WTC11 (cell line): ENCODE measurements at regions of chr18 and their contacts with region 1.

Region 1: DNA sequence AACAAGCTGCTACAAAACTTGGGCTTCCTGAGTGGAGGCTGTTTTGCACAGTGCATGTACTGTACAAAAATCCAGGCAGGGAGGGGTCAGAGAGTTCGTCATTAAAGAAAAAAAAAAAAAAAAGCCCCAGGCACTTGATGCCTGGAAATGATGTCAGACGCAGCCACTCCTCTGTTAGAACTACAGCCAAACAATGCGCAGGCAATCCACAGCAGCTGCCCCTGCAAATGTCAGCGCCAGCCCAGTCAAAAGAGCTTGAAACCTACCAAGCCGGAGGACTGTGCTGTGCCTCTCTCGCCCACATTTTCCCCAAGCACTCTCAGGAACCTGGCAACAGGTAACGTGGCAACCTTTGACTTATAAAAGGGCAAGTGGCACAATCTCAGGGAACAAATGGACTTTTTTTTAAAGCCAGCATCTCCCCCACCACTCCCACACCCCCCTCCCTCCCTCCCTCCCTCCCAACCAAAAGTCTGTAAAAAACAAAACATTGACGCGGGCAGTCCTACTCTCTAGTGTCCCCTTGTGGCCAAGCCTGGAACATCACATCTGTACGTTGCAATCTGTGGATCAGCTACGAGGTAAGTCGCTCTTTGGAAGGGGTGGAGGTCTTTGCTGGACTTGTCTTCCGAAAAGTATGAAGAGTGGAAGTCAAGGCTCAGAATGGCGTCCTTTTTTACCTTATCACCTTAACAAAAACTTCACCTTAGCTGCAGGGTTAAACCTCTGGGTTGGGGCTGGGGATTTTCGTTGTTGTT is 144.1 kb downstream of the TGIF1 start:
- DNase-seq: peak; percentile 91
- ATAC-seq: peak; percentile 81
- H3K4me3 Mint-ChIP-seq: peak overlapping the region; percentile 62
- H3K27ac Mint-ChIP-seq: peak overlapping the region; percentile 95
- H3K4me1 Mint-ChIP-seq: peaks cover 81% of the 10 kb centered on the region
- H3K27me3 Mint-ChIP-seq: peaks cover 28% of the 10 kb centered on the region
- CTCF ChIP-seq: peak; percentile 69; the same call in 1 of the 2 replicates

Region 2: DNA sequence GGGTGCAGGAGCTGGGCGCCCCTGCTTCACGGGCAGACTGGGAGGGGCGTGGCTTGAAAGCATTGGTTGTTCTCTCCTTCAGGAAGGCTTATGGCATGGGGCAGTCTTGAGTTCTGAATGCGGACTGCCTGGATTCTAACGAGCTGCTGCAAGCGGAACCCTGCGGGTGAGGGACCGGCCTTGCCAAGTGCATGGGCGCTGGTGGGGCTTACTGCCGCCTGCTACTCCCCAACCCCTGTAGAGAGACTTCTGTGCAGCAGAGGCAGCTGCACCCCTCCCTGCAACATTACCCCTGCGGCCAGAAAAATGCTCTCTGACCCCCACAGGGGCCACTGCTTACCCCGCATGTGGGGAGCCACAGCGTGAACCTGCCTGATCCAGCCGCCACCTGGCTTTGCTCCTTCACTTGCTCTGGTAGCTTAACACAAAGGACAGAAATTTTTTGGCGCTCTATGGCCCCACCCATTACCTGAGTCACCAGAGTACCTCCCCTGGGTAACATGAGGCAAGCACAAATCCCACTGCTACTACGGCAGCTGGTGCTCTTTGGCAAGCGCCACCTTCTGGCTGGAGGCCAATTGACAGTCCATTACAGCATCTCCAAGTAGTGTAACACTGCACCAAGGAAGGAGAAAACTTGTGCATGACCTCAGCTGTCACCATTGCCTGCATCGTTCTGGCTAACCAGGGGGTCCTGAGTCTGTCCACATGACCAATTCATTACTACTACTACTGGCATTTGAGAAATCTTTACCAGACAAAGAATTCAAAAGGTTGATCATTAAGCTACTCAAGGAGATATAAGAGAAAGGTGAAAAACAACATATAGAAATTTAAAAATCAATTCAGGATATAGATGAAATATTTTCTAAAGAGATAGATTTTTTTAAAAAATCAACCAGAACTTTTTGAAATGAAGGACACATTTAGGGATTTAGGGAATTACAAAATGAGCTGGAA is 296.8 kb before region 1 on chr18:
- CTCF ChIA-PET with region 1: interaction called, 18 read pairs
- POLR2A ChIA-PET with region 1: no interaction called
- DNase-seq: peak; percentile 97
- ATAC-seq: peak; percentile 94
- H3K4me3 Mint-ChIP-seq: peak overlapping the region; percentile 91
- H3K27ac Mint-ChIP-seq: peak overlapping the region; percentile 83
- H3K4me1 Mint-ChIP-seq: peaks cover 18% of the 10 kb centered on the region
- H3K27me3 Mint-ChIP-seq: peaks cover 4% of the 10 kb centered on the region; the same call in 1 of the 2 replicates
- CTCF ChIP-seq: peak; percentile 59

Region 3: GRCh38 chr18:3454365-3455089 is 139.6 kb before region 1 on chr18:
- CTCF ChIA-PET with region 1: interaction called, 53 read pairs
- POLR2A ChIA-PET with region 1: interaction called, 7 read pairs
- DNase-seq: peak; percentile 45
- ATAC-seq: peak; percentile 7
- H3K4me3 Mint-ChIP-seq: peak overlapping the region; percentile 96
- H3K27ac Mint-ChIP-seq: peak overlapping the region; percentile 98
- H3K4me1 Mint-ChIP-seq: peaks cover 62% of the 10 kb centered on the region
- H3K27me3 Mint-ChIP-seq: no peaks in the 10 kb centered on the region
- CTCF ChIP-seq: peak; percentile 46

Region 4: GRCh38 chr18:3481696-3482210 is 112.3 kb before region 1 on chr18:
- CTCF ChIA-PET with region 1: interaction called, 21 read pairs
- POLR2A ChIA-PET with region 1: no interaction called
- DNase-seq: peak; percentile 52
- ATAC-seq: peak; percentile 94
- H3K4me3 Mint-ChIP-seq: no peak overlapping the region
- H3K27ac Mint-ChIP-seq: peak overlapping the region; percentile 71; the same call in 1 of the 2 replicates
- H3K4me1 Mint-ChIP-seq: peaks cover 28% of the 10 kb centered on the region
- H3K27me3 Mint-ChIP-seq: no peaks in the 10 kb centered on the region
- CTCF ChIP-seq: peak; percentile 36; the same call in 1 of the 2 replicates

Region 5: DNA sequence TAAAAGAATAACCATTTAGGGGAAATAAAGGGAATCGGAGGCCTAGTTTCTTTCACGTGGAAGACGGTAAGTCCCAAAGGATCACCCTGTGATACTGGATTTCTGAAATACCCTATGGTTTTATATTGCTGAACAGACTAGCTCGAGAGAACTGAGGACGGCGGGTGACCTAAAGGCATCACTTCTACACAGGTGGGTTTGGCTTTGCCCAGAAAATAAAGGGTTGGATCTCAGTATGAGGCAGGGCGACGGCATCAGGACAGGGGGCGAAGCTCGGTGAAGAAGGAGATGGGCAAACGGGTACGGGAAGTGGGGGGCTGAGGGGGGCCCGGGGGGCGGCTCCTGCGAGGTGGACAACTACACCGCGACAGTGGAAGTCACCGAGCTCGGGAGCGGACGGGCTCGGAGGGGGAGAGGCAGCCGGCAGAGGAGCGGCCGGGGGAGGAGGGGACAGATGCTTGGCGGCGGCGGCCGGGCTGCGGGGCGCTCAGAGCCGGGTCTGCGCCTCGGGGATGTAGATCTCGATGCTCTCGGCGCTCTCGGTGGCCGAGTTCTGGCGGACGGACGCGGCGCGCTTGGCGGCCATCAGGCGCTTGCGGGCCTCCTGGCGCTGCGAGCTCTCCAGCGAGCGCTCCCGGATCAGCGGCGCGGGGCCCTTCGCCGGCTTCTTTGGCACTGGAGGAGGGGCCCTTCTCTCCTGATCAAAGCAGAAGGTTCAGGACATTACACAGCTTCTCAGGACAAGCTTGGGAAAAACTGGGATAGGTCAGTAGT is 95.2 kb before region 1 on chr18:
- CTCF ChIA-PET with region 1: interaction called, 16 read pairs
- POLR2A ChIA-PET with region 1: no interaction called
- DNase-seq: peak; percentile 78
- ATAC-seq: peak; percentile 82
- H3K4me3 Mint-ChIP-seq: peak overlapping the region; percentile 79
- H3K27ac Mint-ChIP-seq: peak overlapping the region; percentile 38; the same call in 1 of the 2 replicates
- H3K4me1 Mint-ChIP-seq: peaks cover 37% of the 10 kb centered on the region
- H3K27me3 Mint-ChIP-seq: peaks cover 10% of the 10 kb centered on the region
- CTCF ChIP-seq: no peak

Region 6: GRCh38 chr18:3604498-3605408 is 10.7 kb after region 1 on chr18:
- CTCF ChIA-PET with region 1: interaction called, 63 read pairs
- POLR2A ChIA-PET with region 1: interaction called, 33 read pairs
- DNase-seq: no peak
- ATAC-seq: no peak
- H3K4me3 Mint-ChIP-seq: no peak overlapping the region
- H3K27ac Mint-ChIP-seq: no peak overlapping the region
- H3K4me1 Mint-ChIP-seq: peaks cover 24% of the 10 kb centered on the region
- H3K27me3 Mint-ChIP-seq: no peaks in the 10 kb centered on the region
- CTCF ChIP-seq: no peak

Region 7: DNA sequence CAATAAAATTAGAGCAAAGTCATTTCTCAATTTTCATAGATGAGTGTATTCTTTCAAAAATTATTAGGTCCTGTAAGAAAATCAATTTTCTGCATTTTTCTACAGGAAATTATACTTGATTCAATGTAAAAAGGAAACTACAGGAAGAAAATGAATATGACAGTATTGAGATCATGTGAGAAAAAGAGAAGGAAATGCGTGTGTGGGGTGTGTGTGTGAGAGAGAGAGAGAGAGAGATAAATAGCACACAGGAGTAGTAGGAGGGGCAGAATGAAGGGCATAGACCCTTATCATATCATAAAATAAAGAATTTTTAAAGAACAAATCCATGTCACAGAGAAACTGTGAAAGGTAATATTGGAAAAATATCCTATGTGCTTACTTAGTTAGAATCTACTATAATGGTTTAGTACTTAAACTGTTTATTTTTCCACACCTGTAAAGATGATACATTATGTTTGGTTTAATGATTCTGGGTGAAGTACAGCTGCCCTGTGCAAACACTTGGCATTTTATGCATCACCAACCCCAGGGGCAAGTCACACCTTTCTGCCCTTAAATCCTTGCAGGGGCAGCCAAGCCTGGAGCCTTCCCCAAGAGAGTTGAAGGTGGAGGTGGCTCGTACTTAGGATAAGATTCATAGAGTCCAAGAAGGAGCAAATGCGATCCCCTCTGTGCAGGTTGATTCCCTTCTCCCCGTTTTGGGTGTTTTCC is 132.3 kb after region 1 on chr18:
- CTCF ChIA-PET with region 1: no interaction called
- POLR2A ChIA-PET with region 1: no interaction called
- DNase-seq: no peak
- ATAC-seq: no peak
- H3K4me3 Mint-ChIP-seq: no peak overlapping the region
- H3K27ac Mint-ChIP-seq: no peak overlapping the region
- H3K4me1 Mint-ChIP-seq: peaks cover 23% of the 10 kb centered on the region
- H3K27me3 Mint-ChIP-seq: no peaks in the 10 kb centered on the region
- CTCF ChIP-seq: no peak

Region 8: DNA sequence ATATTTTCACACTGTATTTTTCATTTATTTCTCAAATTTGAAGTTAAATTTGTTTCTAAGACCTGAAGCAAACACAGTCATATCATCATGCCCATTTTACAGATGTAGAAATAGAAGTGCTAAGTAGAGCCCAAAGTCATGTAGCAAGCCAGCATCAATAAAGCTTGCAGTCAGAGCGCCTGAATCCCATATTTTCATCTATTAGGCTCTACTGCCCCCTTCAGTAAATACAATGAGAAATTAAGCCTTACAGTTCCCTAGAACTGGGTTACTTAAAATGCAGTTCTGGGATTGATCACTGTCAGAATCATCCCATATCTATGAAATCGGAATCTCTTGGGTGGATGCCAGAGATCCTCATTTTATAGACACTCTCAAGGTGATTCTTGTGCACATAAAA is 275.8 kb after region 1 on chr18:
- CTCF ChIA-PET with region 1: interaction called, 14 read pairs
- POLR2A ChIA-PET with region 1: no interaction called
- DNase-seq: no peak
- ATAC-seq: peak; percentile 71
- H3K4me3 Mint-ChIP-seq: no peak overlapping the region
- H3K27ac Mint-ChIP-seq: no peak overlapping the region
- H3K4me1 Mint-ChIP-seq: peaks cover 42% of the 10 kb centered on the region
- H3K27me3 Mint-ChIP-seq: no peaks in the 10 kb centered on the region
- CTCF ChIP-seq: 0 out of 2 replicates have a peak, but pooled peaks have one; percentile 28